MCF 10A (cell line): ENCODE measurements at regions of chr1 and their contacts with region 1.

Region 1: DNA sequence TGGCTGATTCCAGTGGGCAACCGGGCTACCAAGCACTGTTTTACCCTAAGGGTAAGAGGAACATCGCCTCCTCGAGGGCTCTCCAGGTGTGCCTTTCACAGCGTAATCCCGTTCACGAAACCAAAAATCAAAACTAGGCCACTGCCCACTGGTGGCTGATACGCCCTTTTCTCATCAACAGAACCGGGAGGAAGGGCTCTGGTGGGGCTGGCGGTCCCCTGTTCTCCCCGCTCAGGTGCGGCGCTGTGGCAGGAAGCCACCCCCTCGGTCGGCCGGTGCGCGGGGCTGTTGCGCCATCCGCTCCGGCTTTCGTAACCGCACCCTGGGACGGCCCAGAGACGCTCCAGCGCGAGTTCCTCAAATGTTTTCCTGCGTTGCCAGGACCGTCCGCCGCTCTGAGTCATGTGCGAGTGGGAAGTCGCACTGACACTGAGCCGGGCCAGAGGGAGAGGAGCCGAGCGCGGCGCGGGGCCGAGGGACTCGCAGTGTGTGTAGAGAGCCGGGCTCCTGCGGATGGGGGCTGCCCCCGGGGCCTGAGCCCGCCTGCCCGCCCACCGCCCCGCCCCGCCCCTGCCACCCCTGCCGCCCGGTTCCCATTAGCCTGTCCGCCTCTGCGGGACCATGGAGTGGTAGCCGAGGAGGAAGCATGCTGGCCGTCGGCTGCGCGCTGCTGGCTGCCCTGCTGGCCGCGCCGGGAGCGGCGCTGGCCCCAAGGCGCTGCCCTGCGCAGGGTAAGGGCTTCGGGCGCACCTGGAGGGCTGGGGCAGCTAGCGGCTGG is at the start of gene IL6R:
- DNase-seq: peak; percentile 99
- H3K4me3 Mint-ChIP-seq: peak within 1 kb of the TSS; percentile 99
- H3K27ac Mint-ChIP-seq: peak within 1 kb of the TSS; percentile 96
- H3K4me1 Mint-ChIP-seq: peaks cover 37% of the 10 kb centered on the region
- H3K27me3 Mint-ChIP-seq: no peaks in the 10 kb centered on the region
- CTCF ChIP-seq: peak; percentile 38
- total RNA-seq, gene IL6R: 22.8 and 41.0 TPM in 2 replicates

Region 2: GRCh38 chr1:154324669-154325582 is 80.2 kb before region 1 on chr1 and contains the start of gene ATP8B2:
- CTCF ChIA-PET with region 1: interaction called, 4 read pairs
- POLR2A ChIA-PET with region 1: interaction called, 27 read pairs
- intact Hi-C with region 1: loop called (anchors 5 kb)
- DNase-seq: peak; percentile 85
- H3K4me3 Mint-ChIP-seq: peak within 1 kb of the TSS; percentile 76
- H3K27ac Mint-ChIP-seq: peak within 1 kb of the TSS; percentile 77
- H3K4me1 Mint-ChIP-seq: peaks cover 31% of the 10 kb centered on the region
- H3K27me3 Mint-ChIP-seq: no peaks in the 10 kb centered on the region
- CTCF ChIP-seq: peak; percentile 99
- total RNA-seq, gene ATP8B2: 27.1 and 66.3 TPM in 2 replicates

Region 3: DNA sequence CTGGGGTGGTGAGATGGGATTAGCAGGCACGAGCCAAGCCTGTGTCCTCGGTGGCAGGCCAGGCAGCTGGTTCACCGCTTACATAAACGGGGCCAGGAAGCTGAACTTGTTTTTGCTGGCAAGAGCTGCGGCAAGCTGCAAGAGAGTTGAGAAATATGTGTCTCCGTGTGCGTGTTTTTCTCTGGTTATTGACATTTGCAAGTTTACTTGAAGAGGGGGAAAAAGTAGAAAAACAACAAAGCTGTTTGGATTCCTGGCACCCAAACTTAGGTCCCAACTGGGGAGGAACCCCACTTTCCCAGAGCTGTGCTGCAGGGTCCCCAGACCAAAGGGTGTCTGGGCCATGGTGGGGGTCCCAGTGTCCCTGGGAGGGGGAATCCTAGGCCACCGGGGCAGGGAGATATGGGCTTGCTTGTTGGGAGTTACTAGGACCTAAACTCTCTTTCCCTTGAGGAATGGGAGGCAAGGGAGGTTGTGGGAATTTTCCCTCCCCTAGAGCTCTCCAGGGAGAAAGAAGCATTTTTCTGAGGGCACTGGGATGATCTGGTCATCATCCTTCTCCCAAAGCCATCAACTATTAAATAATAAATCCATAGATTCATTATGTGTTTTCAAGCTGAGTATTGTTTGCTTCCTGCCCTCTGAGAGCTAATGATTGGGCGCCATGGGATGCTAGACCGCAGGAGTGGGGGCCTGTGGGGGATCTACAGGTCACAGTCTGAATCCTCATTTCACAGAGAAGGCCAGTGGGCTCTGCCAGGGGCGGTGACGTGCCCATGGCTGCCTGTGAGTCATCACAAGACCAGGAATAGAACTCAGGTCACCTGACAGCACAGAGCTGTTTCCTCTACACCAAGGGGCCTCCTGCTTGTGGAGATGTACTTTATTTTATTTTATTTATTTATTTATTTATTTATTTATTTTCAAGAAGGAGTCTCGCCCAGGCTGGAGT is 14.7 kb after region 1 on chr1:
- CTCF ChIA-PET with region 1: interaction called, 51 read pairs
- POLR2A ChIA-PET with region 1: interaction called, 1,077 read pairs
- intact Hi-C with region 1: loop called (anchors 1 kb)
- DNase-seq: peak; percentile 98
- H3K4me3 Mint-ChIP-seq: peak overlapping the region; percentile 59
- H3K27ac Mint-ChIP-seq: peak overlapping the region; percentile 67
- H3K4me1 Mint-ChIP-seq: peaks cover 85% of the 10 kb centered on the region
- H3K27me3 Mint-ChIP-seq: no peaks in the 10 kb centered on the region
- CTCF ChIP-seq: no peak

Region 4: GRCh38 chr1:154445040-154445472 is 39.9 kb after region 1 on chr1:
- CTCF ChIA-PET with region 1: interaction called, 4 read pairs
- POLR2A ChIA-PET with region 1: interaction called, 1,077 read pairs
- intact Hi-C with region 1: loop called (anchors 2 kb)
- DNase-seq: peak; percentile 65
- H3K4me3 Mint-ChIP-seq: no peak overlapping the region
- H3K27ac Mint-ChIP-seq: no peak overlapping the region
- H3K4me1 Mint-ChIP-seq: peaks cover 34% of the 10 kb centered on the region
- H3K27me3 Mint-ChIP-seq: no peaks in the 10 kb centered on the region
- CTCF ChIP-seq: no peak

Region 5: GRCh38 chr1:154546264-154547063 is 141.3 kb after region 1 on chr1:
- CTCF ChIA-PET with region 1: interaction called, 4 read pairs
- POLR2A ChIA-PET with region 1: no interaction called
- intact Hi-C with region 1: loop called (anchors 2 kb)
- DNase-seq: peak; percentile 83
- H3K4me3 Mint-ChIP-seq: no peak overlapping the region
- H3K27ac Mint-ChIP-seq: no peak overlapping the region
- H3K4me1 Mint-ChIP-seq: peaks cover 10% of the 10 kb centered on the region
- H3K27me3 Mint-ChIP-seq: peaks cover 30% of the 10 kb centered on the region
- CTCF ChIP-seq: peak; percentile 87

Region 6: GRCh38 chr1:154627257-154628120 is 222.3 kb after region 1 on chr1:
- CTCF ChIA-PET with region 1: no interaction called
- POLR2A ChIA-PET with region 1: no interaction called
- intact Hi-C with region 1: no loop called
- DNase-seq: peak; percentile 93
- H3K4me3 Mint-ChIP-seq: peak overlapping the region; percentile 84
- H3K27ac Mint-ChIP-seq: peak overlapping the region; percentile 99
- H3K4me1 Mint-ChIP-seq: peaks cover 29% of the 10 kb centered on the region
- H3K27me3 Mint-ChIP-seq: peaks cover 26% of the 10 kb centered on the region
- CTCF ChIP-seq: no peak